RWPE1 (cell line): ENCODE measurements at regions of chr10 and their contacts with region 1.

Region 1: GRCh38 chr10:89643431-89644331 is 1.4 kb downstream of the PANK1 start:
- DNase-seq: peak; percentile 98
- H3K27ac ChIP-seq: peak overlapping the region; percentile 98
- CTCF ChIP-seq: no peak

Region 2: GRCh38 chr10:89490596-89491335 is 152.9 kb before region 1 on chr10:
- CTCF ChIA-PET with region 1: no interaction called
- POLR2A ChIA-PET with region 1: no interaction called
- DNase-seq: no peak
- H3K27ac ChIP-seq: no peak overlapping the region
- CTCF ChIP-seq: no peak

Region 3: DNA sequence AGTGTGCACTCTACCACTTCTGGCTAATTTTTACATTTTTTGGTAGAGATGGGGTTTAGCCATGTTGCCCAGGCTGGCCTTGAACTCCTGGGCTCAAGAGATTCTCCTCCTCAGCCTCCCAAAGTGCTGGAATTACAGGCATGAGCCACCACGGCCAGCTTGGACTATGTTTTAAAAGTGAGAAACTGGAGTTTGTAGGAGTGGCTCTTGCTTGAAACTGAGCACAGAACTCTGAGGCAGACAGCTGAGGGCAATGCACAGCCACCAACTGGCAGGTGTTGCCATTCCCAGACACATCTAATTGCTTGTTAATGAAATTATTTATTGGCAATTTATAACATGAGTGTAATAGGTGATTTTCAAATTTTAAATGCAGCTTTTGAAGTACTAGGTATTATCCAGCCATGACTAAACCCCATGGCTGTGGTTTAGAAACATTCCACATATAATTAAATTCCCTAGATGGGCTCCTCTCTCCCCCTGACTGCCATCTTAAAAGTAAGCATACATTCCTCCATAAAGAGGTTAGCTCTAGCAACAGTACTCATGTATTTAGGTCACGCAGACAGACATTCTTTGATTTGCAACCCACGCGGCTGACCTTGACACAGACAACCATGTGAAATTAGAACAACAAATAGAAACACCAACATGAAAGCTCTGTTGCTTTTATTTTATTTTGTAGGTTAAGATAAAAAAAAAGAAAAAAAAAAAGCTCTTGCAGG is 18.5 kb before region 1 on chr10:
- CTCF ChIA-PET with region 1: no interaction called
- POLR2A ChIA-PET with region 1: no interaction called
- DNase-seq: no peak
- H3K27ac ChIP-seq: no peak overlapping the region
- CTCF ChIP-seq: no peak

Region 4: GRCh38 chr10:89655722-89656121 is 12.0 kb after region 1 on chr10:
- CTCF ChIA-PET with region 1: no interaction called
- POLR2A ChIA-PET with region 1: no interaction called
- DNase-seq: no peak
- H3K27ac ChIP-seq: no peak overlapping the region
- CTCF ChIP-seq: no peak

Region 5: DNA sequence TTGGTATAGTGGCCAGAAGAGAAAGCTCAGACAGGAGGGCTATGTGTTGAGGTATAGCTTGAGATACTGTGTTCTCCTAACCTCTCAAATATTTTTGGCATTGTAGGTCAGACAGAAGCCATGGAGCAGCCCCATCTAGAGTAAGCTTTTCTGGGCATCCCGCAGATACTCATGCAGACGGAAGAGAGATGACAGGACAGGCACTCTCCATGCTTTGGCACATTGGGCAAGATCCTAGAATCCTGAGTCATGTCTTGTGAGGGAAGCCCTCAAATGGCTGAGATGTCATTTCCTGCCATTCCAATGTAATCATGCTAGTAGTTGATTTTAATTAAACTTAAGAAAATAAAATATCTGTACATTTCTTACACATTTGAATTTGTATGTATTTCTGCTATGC is 40.9 kb after region 1 on chr10:
- CTCF ChIA-PET with region 1: no interaction called
- POLR2A ChIA-PET with region 1: no interaction called
- DNase-seq: no peak
- H3K27ac ChIP-seq: no peak overlapping the region
- CTCF ChIP-seq: no peak

Region 6: DNA sequence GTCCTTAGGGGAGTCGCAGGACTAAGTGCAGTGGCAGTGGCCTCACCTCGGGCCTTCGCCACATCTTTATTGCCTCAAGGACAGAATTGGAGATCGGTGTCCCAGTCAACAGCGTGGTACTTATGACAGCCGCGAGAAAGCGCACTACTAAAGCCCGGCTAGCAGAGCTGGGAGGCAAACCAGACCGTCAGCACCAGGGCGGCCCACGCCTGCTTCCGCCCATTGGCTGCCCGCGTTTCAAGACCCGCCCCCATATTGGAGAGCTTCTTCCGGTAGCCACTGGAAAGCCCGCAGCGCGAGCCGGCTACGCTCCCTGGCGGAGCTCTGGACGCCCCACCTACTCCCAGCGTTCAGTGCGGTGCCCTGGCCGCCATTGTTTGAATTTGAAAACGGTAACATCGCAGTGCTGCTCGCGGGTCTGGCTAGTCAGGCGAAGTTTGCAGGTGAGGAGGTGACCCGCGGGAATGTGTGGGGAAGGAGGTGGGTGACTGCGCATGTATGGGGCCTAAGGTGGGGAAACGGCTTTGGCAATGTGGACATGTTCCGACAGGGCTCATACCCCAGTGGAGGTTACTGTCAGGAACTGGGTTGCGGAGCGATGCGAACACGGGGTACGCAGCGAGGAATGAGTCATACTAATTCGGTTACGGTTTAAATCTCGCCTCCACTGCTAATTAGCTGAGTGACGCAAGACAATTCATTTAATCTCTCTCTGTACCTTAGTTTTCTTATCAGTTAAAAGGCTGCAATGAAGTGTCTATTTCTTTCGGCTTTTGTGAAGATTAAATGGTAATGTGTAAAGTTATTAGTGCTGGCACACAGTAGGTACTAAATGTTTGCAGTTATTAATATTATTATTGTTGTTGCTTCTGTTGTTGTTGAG is 57.8 kb after region 1 on chr10 and contains the start of gene KIF20B:
- CTCF ChIA-PET with region 1: interaction called, 5 read pairs
- POLR2A ChIA-PET with region 1: interaction called, 22 read pairs
- DNase-seq: peak; percentile 98
- H3K27ac ChIP-seq: peak within 1 kb of the TSS; percentile 94
- CTCF ChIP-seq: peak; percentile 28